ENCODE measurements at regions of chr2 and their contacts with region 1.

Region 1: DNA sequence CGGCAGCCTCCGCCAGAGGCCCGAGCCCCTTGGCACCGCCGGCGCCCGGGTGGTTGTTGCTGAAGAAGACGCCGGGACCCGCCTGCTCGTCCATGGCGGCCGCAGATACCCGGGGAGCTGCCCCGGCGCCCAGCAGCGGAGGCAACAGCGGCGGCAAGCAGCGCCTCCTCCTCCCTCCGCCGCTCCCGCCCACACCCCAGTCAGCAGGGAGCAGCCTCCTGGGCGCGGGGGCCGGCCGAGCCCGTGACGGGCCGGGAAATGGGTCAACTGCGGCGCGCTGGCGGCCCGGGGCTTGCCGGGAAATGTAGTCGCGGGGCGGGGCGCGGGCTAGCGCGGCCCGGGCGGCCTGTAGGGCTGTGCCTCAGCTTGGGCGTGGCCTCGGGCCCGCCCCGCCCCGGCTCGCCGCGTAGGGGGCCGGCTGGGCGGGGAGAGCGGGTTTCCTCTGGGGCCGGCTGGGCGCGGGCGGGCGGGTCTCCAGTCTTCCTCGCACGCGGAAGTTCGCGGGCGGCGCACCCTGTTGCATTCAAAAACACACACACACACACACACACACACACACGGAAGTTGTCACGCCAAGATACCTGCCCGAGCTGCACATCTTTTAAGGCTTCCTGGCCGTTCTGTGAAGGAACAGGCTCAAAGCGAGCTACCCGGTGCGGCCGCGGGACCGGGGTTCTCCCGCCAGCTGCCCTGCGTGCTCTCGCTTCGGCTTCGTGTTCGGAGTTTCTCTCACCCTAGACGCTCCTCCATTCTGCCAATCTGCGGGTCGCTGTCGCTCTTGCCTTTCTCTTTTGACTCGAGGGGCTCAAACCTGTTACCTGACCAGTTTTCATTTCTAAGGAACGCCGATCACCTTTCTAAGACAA is at the start of gene STRN:
- DNase-seq: peak; percentile 93
- ATAC-seq: peak; percentile 96
- H3K4me3 ChIP-seq: peak within 1 kb of the TSS; percentile 88 to 100 (median 97)
- H3K27ac ChIP-seq: peak within 1 kb of the TSS; percentile 77
- H3K4me1 ChIP-seq: peaks cover 41% of the 10 kb centered on the region
- H3K27me3 ChIP-seq: no peaks in the 10 kb centered on the region; a peak in 1 of 5 replicates
- CTCF ChIP-seq: no peak; the same call in 1 of the 2 replicates
- EP300 ChIP-seq: no peak; a peak in 1 of 4 replicates
- POLR2A ChIP-seq: peak; percentile 76 to 78
- RAD21 ChIP-seq: peak; percentile 58
- total RNA-seq, gene STRN: 19.3 and 28.4 TPM in 2 replicates

Region 2: GRCh38 chr2:36951574-36951973 is 15.0 kb before region 1 on chr2:
- CTCF ChIA-PET with region 1: no interaction called
- POLR2A ChIA-PET with region 1: no interaction called
- in situ Hi-C with region 1: no loop called
- intact Hi-C with region 1: no loop called
- DNase-seq: no peak
- ATAC-seq: no peak
- H3K4me3 ChIP-seq: no peak overlapping the region
- H3K27ac ChIP-seq: no peak overlapping the region
- H3K4me1 ChIP-seq: peaks cover 9% of the 10 kb centered on the region
- H3K27me3 ChIP-seq: no peaks in the 10 kb centered on the region
- CTCF ChIP-seq: no peak
- EP300 ChIP-seq: no peak
- POLR2A ChIP-seq: no peak
- RAD21 ChIP-seq: no peak

Region 3: GRCh38 chr2:36988008-36988407 is 21.4 kb after region 1 on chr2:
- CTCF ChIA-PET with region 1: no interaction called
- POLR2A ChIA-PET with region 1: no interaction called
- in situ Hi-C with region 1: no loop called
- intact Hi-C with region 1: loop called (anchors 1 kb)
- DNase-seq: peak; percentile 23
- ATAC-seq: no peak
- H3K4me3 ChIP-seq: no peak overlapping the region
- H3K27ac ChIP-seq: no peak overlapping the region
- H3K4me1 ChIP-seq: peaks cover 7% of the 10 kb centered on the region; the same call in 1 of the 2 replicates
- H3K27me3 ChIP-seq: no peaks in the 10 kb centered on the region
- CTCF ChIP-seq: no peak
- EP300 ChIP-seq: peak in 1 of 2 experiments; percentile 44; a peak in 1 of 4 replicates
- POLR2A ChIP-seq: no peak
- RAD21 ChIP-seq: no peak

Region 4: GRCh38 chr2:37005118-37005868 is 38.7 kb after region 1 on chr2:
- CTCF ChIA-PET with region 1: no interaction called
- POLR2A ChIA-PET with region 1: no interaction called
- in situ Hi-C with region 1: no loop called
- intact Hi-C with region 1: loop called (anchors 2 kb)
- DNase-seq: peak; percentile 33
- ATAC-seq: peak; percentile 63
- H3K4me3 ChIP-seq: no peak overlapping the region
- H3K27ac ChIP-seq: no peak overlapping the region
- H3K4me1 ChIP-seq: no peaks in the 10 kb centered on the region
- H3K27me3 ChIP-seq: no peaks in the 10 kb centered on the region
- CTCF ChIP-seq: peak; percentile 66
- EP300 ChIP-seq: no peak
- POLR2A ChIP-seq: no peak
- RAD21 ChIP-seq: peak; percentile 26; the same call in 1 of the 2 replicates

Region 5: GRCh38 chr2:37083873-37084794 is 117.5 kb after region 1 on chr2 and contains the starts of genes GPATCH11 and HEATR5B:
- CTCF ChIA-PET with region 1: no interaction called
- POLR2A ChIA-PET with region 1: no interaction called
- in situ Hi-C with region 1: no loop called
- intact Hi-C with region 1: loop called (anchors 5 kb)
- DNase-seq: peak; percentile 98
- ATAC-seq: peak; percentile 97
- H3K4me3 ChIP-seq: peak within 1 kb of the TSS; percentile 80 to 94 (median 90)
- H3K27ac ChIP-seq: peak within 1 kb of the TSS; percentile 77
- H3K4me1 ChIP-seq: peaks cover 34% of the 10 kb centered on the region
- H3K27me3 ChIP-seq: no peaks in the 10 kb centered on the region; a peak in 1 of 5 replicates
- CTCF ChIP-seq: no peak
- EP300 ChIP-seq: peak in 1 of 2 experiments; percentile 16; a peak in 1 of 4 replicates
- POLR2A ChIP-seq: peak; percentile 79 to 91
- RAD21 ChIP-seq: peak; percentile 11; the same call in 1 of the 2 replicates
- total RNA-seq, gene GPATCH11: 8.7 and 13.3 TPM in 2 replicates
- total RNA-seq, gene HEATR5B: 16.3 and 17.6 TPM in 2 replicates

Measured in HepG2 (cell line).